ENCODE measurements at regions of chr1 and their contacts with region 1.

Region 1: GRCh38 chr1:152013664-152014237 is 20.1 kb upstream of the S100A10 start:
- DNase-seq: peak; percentile 63
- H3K4me3 Mint-ChIP-seq: no peak overlapping the region
- H3K27ac Mint-ChIP-seq: no peak overlapping the region
- H3K4me1 Mint-ChIP-seq: peaks cover 3% of the 10 kb centered on the region
- H3K27me3 Mint-ChIP-seq: peaks cover 57% of the 10 kb centered on the region

Region 2: DNA sequence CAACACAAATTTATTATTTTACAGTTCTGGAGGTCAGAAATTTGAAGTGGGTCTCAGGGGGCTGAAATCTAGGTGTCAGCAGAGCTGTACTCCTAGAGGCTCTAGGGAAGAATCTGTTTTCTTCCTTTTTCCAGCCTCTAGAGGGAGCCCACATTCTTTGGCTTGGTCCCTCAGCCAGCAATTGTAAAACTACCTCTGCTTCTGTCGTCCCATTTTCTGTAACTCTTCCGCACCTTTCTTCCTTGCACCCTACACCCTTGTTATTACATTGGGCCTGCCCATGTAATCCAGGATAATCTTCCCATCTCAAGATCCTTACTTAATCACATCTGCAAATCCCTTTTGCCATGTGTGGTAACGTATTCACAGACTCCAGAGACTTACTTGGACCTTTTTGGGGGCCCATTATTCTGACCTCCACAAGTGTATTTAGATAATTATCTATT is 79.7 kb before region 1 on chr1:
- CTCF ChIA-PET with region 1: interaction called, 37 read pairs
- DNase-seq: peak; percentile 51
- H3K4me3 Mint-ChIP-seq: no peak overlapping the region
- H3K27ac Mint-ChIP-seq: no peak overlapping the region
- H3K4me1 Mint-ChIP-seq: peaks cover 2% of the 10 kb centered on the region
- H3K27me3 Mint-ChIP-seq: peaks cover 14% of the 10 kb centered on the region

Region 3: DNA sequence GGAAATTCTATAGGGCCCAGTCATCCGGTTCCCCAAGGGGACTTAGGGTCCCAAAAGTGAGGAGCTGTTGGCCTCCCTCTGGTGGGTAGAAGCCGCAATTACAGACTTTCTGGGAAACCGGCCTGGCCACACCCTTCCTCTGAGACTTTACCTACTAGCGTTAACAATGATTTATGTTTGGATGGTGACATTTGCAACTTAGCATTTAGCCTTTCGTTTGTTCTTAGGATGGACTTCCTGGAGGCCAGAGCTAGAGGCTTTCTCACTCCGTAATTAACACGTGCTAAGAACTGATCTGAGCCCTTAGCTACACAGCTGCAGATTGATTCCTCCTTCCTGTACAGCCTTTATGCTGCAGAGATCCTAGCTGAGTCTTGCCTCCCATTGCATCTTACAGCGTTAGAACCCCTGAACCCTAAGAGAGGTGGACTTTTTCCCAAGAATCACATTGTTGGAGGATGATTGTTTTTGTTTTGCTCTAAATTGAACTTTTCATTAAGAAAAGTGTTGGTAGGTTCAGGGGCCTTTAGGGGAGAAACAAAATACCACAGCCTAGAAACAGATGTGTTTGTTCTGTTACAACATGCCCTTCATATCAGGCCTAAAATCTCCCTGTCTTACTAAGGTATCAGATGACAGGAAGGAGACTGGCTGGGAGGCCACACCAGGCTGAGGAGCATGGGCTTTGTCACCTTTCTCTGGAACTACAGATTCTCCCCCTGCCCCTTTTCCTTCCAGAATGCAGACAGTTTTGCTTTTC is 21.1 kb after region 1 on chr1:
- CTCF ChIA-PET with region 1: interaction called, 12 read pairs
- DNase-seq: peak; percentile 80
- H3K4me3 Mint-ChIP-seq: peak overlapping the region; percentile 99
- H3K27ac Mint-ChIP-seq: peak overlapping the region; percentile 98
- H3K4me1 Mint-ChIP-seq: peaks cover 49% of the 10 kb centered on the region
- H3K27me3 Mint-ChIP-seq: no peaks in the 10 kb centered on the region